ENCODE measurements at regions of chr14 and their contacts with region 1.

Region 1: DNA sequence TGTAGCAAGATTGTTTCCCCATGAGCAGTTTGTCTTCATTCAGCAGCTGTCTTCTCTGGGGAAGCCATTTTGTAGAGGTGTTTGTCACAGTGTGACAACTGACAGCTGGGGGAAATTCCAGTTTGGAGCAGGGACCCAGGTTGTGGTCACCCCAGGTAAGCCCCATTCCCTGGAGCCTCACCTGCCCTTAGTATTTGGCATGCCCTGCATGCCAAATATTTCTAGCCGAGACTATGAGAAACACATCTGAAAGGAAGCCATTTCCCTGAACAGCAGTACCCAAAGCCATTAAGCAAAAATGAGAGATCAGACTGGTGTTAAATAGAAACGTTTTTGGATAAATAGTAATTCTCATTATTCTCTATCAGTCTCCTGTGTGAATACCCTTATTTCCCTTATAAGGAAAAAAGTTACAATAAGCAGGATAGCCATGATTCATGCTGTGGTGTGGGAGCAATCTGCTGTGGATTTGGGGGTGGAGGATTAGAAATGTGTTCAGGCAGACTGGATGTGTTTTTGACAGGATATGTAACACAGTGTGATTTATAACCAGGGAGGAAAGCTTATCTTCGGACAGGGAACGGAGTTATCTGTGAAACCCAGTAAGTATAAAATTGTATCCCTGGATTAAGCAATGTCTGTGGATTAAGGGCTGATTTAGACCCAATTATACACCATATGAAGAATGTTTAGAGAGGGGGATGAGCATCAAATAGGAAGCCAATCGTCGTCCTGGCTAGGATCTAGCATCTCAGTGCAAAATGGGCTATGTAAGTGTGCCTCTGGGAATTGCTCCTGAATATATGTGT is 68.9 kb downstream of the DAD1 start:
- DNase-seq: no peak
- ATAC-seq: peak; percentile 14
- H3K4me3 Mint-ChIP-seq: peak overlapping the region; percentile 84
- H3K27ac Mint-ChIP-seq: peak overlapping the region; percentile 97
- H3K4me1 Mint-ChIP-seq: peaks cover 87% of the 10 kb centered on the region
- H3K27me3 Mint-ChIP-seq: no peaks in the 10 kb centered on the region

Region 2: GRCh38 chr14:21723431-21724045 is 796.5 kb before region 1 on chr14:
- CTCF ChIA-PET with region 1: no interaction called
- POLR2A ChIA-PET with region 1: no interaction called
- intact Hi-C with region 1: loop called in 1 of 2 experiments (anchors 5 kb)
- DNase-seq: peak; percentile 71
- ATAC-seq: peak; percentile 90
- H3K4me3 Mint-ChIP-seq: peak overlapping the region; percentile 70
- H3K27ac Mint-ChIP-seq: peak overlapping the region; percentile 77
- H3K4me1 Mint-ChIP-seq: no peaks in the 10 kb centered on the region
- H3K27me3 Mint-ChIP-seq: peaks cover 21% of the 10 kb centered on the region

Region 3: GRCh38 chr14:22122227-22122818 is 397.8 kb before region 1 on chr14:
- CTCF ChIA-PET with region 1: no interaction called
- POLR2A ChIA-PET with region 1: no interaction called
- intact Hi-C with region 1: loop called in 1 of 2 experiments (anchors 10 kb)
- DNase-seq: peak; percentile 33
- ATAC-seq: no peak
- H3K4me3 Mint-ChIP-seq: peak overlapping the region; percentile 77
- H3K27ac Mint-ChIP-seq: peak overlapping the region; percentile 92
- H3K4me1 Mint-ChIP-seq: peaks cover 13% of the 10 kb centered on the region
- H3K27me3 Mint-ChIP-seq: no peaks in the 10 kb centered on the region

Region 4: DNA sequence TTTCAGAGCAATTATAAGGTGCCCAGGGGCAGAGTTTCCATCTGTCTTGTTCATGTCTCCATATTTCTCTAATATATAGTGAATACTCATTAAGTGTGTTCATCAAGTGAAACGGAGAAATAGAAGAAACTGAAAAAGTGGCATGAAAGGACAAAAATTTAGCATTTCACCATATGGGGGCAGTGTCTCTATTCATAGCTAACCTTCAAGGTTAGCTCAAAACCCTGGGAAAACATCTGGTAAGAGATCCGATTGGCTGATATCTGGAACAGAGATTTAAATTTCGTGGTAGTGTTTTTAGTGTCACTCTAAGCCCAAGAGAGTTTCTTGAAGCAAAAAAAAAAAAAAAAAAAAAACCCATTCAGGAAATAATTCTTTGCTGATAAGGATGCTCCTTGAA is 298.6 kb before region 1 on chr14:
- CTCF ChIA-PET with region 1: no interaction called
- POLR2A ChIA-PET with region 1: no interaction called
- intact Hi-C with region 1: loop called in 1 of 2 experiments (anchors 10 kb)
- DNase-seq: no peak
- ATAC-seq: no peak
- H3K4me3 Mint-ChIP-seq: peak overlapping the region; percentile 58
- H3K27ac Mint-ChIP-seq: peak overlapping the region; percentile 51
- H3K4me1 Mint-ChIP-seq: peaks cover 14% of the 10 kb centered on the region
- H3K27me3 Mint-ChIP-seq: no peaks in the 10 kb centered on the region

Region 5: GRCh38 chr14:22338917-22339715 is 181.0 kb before region 1 on chr14:
- CTCF ChIA-PET with region 1: no interaction called
- POLR2A ChIA-PET with region 1: no interaction called
- intact Hi-C with region 1: no loop called
- DNase-seq: no peak
- ATAC-seq: no peak
- H3K4me3 Mint-ChIP-seq: no peak overlapping the region
- H3K27ac Mint-ChIP-seq: no peak overlapping the region
- H3K4me1 Mint-ChIP-seq: no peaks in the 10 kb centered on the region
- H3K27me3 Mint-ChIP-seq: no peaks in the 10 kb centered on the region

Region 6: DNA sequence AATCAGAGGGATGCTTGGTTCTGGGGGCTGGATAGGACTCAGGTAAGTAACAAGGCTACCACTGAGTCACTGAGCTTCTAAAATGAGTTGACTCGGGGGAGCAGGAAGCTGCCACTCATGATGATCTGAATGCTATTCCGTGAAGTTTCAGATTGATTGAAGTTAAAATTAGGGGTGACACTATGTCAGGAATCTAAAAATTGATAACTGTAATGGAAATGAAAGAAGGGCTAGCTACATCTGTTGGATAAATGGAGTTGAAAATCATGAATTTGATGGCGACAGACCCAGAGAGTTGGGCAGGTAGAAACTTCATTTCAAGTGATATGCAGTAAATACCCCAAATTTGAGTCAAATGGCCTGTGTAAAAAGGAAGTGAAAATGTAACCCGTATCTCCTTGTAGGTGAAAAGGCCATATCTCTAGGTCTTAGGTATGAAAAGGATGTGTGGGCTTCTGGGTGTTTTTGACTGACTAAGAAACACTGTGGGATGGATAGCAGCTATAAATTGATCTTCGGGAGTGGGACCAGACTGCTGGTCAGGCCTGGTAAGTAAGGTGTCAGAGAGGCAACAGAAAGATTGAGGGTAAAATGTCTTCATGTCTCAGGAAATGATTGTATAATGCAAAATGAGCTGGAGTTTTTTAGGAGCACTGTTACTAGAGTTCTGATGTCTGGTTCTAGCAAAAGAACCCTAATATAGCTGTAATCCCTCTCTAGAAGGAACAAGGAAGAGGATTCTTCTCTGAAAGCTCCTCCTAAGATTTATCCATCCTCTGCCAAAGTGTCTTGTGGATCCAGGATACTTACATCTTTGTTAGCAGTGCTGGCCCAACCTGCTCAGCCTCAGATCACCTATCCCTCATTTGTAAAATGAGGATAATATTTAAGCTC is 11.6 kb after region 1 on chr14:
- CTCF ChIA-PET with region 1: interaction called, 32 read pairs
- POLR2A ChIA-PET with region 1: interaction called, 5 read pairs
- intact Hi-C with region 1: loop called in 1 of 2 experiments (anchors 1 kb)
- DNase-seq: peak; percentile 60
- ATAC-seq: peak; percentile 70
- H3K4me3 Mint-ChIP-seq: peak overlapping the region; percentile 84
- H3K27ac Mint-ChIP-seq: peak overlapping the region; percentile 100
- H3K4me1 Mint-ChIP-seq: peaks cover 87% of the 10 kb centered on the region
- H3K27me3 Mint-ChIP-seq: no peaks in the 10 kb centered on the region

Region 7: GRCh38 chr14:22549981-22550673 is 30.0 kb after region 1 on chr14:
- CTCF ChIA-PET with region 1: interaction called, 7 read pairs
- POLR2A ChIA-PET with region 1: interaction called, 10 read pairs
- intact Hi-C with region 1: loop called in 1 of 2 experiments (anchors 5 kb)
- DNase-seq: peak; percentile 84
- ATAC-seq: peak; percentile 63
- H3K4me3 Mint-ChIP-seq: peak overlapping the region; percentile 71
- H3K27ac Mint-ChIP-seq: peak overlapping the region; percentile 99
- H3K4me1 Mint-ChIP-seq: peaks cover 94% of the 10 kb centered on the region
- H3K27me3 Mint-ChIP-seq: no peaks in the 10 kb centered on the region

Measured in activated CD4-positive, alpha-beta T cell treated with anti-CD3 and anti-CD28 coated beads for 36 hours (primary cell).